Calu3 (cell line): ENCODE measurements at regions of chr18 and their contacts with region 1.

Region 1: DNA sequence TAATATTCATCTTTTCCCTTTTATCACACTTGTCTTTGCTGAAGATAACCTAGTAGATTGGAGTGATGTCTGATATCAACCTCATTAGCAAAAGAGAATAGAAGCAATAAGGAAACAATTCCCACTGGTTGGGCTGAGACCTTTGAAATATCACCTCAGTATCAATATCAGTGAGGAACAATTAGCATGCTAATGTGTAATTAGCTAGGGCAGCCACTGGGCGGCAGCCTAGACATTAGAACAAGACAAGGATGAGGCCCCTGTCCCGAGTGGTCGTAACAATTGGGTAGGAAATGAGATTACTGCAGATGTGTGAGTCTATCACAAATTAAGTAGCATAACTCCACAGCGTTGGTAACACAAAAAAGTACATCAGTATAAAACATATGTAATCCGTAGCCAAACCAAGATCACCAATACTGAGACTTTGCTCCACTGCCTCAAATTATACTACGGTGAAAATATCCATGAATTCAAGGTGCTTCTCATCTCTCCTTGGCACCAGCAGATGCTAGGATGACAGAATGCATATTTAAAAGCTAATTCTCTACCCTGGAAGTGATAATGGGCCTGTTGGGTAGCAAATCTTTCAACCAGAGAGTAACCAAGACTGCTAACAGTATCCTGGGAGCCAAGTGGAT is 99.1 kb downstream of the ALPK2 start:
- DNase-seq: peak; percentile 70
- H3K4me3 Mint-ChIP-seq: no peak overlapping the region
- H3K27ac Mint-ChIP-seq: no peak overlapping the region
- H3K4me1 Mint-ChIP-seq: peaks cover 47% of the 10 kb centered on the region
- H3K27me3 Mint-ChIP-seq: no peaks in the 10 kb centered on the region
- CTCF ChIP-seq: peak; percentile 94

Region 2: GRCh38 chr18:58499522-58500221 is 30.2 kb before region 1 on chr18:
- CTCF ChIA-PET with region 1: interaction called, 13 read pairs
- intact Hi-C with region 1: no loop called
- DNase-seq: no peak
- H3K4me3 Mint-ChIP-seq: no peak overlapping the region
- H3K27ac Mint-ChIP-seq: no peak overlapping the region
- H3K4me1 Mint-ChIP-seq: peaks cover 27% of the 10 kb centered on the region
- H3K27me3 Mint-ChIP-seq: no peaks in the 10 kb centered on the region
- CTCF ChIP-seq: no peak

Region 3: DNA sequence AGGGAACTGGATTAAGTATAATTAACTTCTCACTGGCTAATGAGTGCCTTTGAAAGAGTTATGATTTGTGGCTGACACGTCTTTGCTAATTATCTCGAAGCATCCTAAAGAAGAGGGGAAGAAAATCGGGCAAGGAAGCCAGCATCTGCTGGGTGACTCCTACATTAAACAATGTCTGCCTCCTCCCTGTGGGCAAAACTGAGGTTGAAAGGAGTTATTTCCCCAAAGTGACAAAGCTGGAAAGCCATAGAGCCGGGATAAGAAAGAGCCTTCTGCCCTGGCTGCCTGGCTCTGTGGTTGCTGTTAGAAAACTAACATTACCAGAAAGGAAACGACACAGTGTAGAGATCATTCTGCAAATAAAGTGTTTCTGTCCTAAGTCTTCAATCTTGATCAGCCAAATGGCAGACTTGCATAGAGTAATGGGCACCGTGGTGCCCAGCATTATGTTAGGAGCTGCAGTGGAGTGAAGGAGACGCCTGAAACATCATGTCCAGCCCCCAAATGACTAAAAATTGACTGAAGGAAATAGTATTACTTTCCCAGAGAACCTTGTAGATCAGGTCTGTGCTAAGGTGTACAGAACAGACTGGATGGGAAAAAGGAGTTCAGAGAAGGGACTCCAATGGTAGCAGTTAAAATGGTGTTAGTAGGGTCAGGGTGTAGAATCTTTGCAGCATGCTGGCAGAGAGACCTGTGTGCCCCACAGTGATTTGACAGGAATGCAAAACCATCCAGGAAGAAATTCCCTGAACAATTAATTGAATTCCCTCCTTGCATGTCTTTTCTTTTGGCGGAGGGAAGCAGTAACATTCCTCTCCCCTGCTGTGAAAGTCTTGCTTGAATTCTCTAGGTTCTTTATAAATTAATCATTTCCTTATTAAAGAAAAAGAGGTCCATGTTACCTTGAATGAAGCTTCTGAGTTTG is 54.6 kb after region 1 on chr18:
- CTCF ChIA-PET with region 1: no interaction called
- intact Hi-C with region 1: loop called (anchors 5 kb)
- DNase-seq: no peak
- H3K4me3 Mint-ChIP-seq: no peak overlapping the region
- H3K27ac Mint-ChIP-seq: no peak overlapping the region
- H3K4me1 Mint-ChIP-seq: peaks cover 15% of the 10 kb centered on the region
- H3K27me3 Mint-ChIP-seq: no peaks in the 10 kb centered on the region
- CTCF ChIP-seq: no peak

Region 4: DNA sequence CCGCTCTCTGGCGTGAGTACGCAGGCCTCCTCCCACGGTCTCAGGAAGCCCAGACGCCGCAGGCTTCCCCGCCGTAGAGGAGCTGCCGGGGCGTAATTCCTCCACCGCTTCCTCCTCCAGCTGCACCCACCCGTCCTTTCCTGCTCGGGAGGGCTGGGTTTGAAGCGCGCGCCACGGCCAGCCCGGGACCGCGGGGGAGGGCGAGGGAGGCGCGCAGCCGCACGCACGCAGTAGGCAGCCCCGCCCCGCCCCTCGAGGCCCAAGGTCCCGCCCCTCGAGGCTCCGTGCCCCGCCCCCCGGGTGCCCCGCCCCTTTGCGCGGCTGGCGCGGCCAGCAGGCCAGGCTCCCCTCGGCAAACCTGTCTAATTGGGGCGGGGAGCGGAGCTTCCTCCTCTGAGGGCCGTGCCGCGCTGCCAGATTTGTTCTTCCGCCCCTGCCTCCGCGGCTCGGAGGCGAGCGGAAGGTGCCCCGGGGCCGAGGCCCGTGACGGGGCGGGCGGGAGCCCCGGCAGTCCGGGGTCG is 141.3 kb after region 1 on chr18 and contains the start of gene MALT1:
- CTCF ChIA-PET with region 1: interaction called, 3 read pairs
- intact Hi-C with region 1: loop called (anchors 2 kb)
- DNase-seq: peak; percentile 98
- H3K4me3 Mint-ChIP-seq: peak within 1 kb of the TSS; percentile 91
- H3K27ac Mint-ChIP-seq: peak within 1 kb of the TSS; percentile 78
- H3K4me1 Mint-ChIP-seq: peaks cover 66% of the 10 kb centered on the region
- H3K27me3 Mint-ChIP-seq: no peaks in the 10 kb centered on the region
- CTCF ChIP-seq: no peak
- total RNA-seq, gene MALT1: 28.1 and 37.6 TPM in 2 replicates

Region 5: GRCh38 chr18:59070181-59070912 is 540.5 kb after region 1 on chr18:
- CTCF ChIA-PET with region 1: no interaction called
- intact Hi-C with region 1: loop called (anchors 10 kb)
- DNase-seq: peak; percentile 95
- H3K4me3 Mint-ChIP-seq: no peak overlapping the region
- H3K27ac Mint-ChIP-seq: no peak overlapping the region
- H3K4me1 Mint-ChIP-seq: peaks cover 30% of the 10 kb centered on the region
- H3K27me3 Mint-ChIP-seq: no peaks in the 10 kb centered on the region
- CTCF ChIP-seq: peak; percentile 94